ENCODE measurements at regions of chr4 and their contacts with region 1.

Region 1: DNA sequence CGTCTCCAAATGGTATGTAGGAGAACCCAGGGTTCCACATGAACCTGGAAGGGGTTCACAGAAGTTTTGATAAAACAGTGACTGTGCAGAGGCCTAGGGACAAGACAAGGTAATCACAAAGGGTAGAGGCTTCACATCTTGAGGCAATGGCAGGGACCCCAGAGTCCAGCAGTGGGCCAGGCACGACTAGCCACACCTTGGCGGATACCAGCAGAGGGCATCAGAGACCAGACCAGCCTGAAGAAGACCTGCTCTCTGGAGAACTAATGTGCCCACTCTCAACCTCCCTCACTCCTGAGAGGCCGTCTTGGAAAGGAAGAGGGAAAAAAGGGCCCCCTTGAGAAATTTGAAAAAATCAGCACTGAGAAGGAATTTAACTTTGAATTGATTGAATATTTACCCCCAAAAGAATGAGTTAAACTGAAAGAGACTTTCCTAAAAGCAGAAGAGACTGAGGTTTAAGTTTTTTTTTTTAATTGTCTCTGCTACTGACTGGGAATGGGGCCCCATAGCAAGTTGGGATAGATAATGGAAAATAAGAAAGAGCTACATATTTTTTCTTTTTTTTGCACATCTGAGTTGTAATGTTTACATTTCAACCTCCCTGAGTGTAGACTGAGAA is 243.8 kb upstream of the JADE1 start:
- DNase-seq: peak; percentile 77 to 83 (median 78)
- ATAC-seq: peak; percentile 86
- H3K4me3 ChIP-seq: no peak overlapping the region
- H3K27ac ChIP-seq: no peak overlapping the region
- H3K4me1 ChIP-seq: peaks cover 37% of the 10 kb centered on the region
- H3K27me3 ChIP-seq: no peaks in the 10 kb centered on the region
- CTCF ChIP-seq: peak; percentile 61 to 91 (median 84)
- POLR2A ChIP-seq: no peak

Region 2: GRCh38 chr4:128809477-128810330 is 244.0 kb after region 1 on chr4 and contains the start of gene JADE1:
- intact Hi-C with region 1: loop called (anchors 10 kb)
- DNase-seq: peak; percentile 94 to 96 (median 96)
- ATAC-seq: peak; percentile 67
- H3K4me3 ChIP-seq: peak within 1 kb of the TSS; percentile 82 to 93
- H3K27ac ChIP-seq: peak within 1 kb of the TSS; percentile 98 to 99 (median 98)
- H3K4me1 ChIP-seq: peaks cover 29% of the 10 kb centered on the region
- H3K27me3 ChIP-seq: no peaks in the 10 kb centered on the region
- CTCF ChIP-seq: peak; percentile 32 to 86 (median 77)
- POLR2A ChIP-seq: peak; percentile 85 to 88 (median 87)
- total RNA-seq, gene JADE1: 44.4 to 50.4 TPM

Region 3: DNA sequence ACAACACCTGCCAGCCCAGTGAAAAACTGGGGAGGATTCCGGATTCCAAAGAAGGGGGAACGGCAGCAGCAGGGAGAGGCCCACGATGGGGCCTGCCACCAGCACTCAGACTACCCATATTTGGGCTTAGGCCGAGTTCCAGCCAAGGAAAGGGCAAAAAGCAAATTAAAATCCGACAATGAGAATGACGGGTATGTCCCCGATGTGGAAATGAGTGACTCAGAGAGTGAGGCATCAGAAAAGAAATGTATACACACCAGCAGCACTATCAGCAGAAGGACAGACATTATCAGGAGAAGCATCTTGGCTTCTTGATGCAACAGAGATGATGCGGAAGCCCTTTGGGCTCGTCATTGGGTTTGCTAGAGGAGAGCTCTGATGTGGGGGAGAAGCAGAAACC is 306.3 kb after region 1 on chr4:
- intact Hi-C with region 1: loop called (anchors 5 kb)
- DNase-seq: no peak
- ATAC-seq: no peak
- H3K4me3 ChIP-seq: no peak overlapping the region
- H3K27ac ChIP-seq: no peak overlapping the region
- H3K4me1 ChIP-seq: no peaks in the 10 kb centered on the region
- H3K27me3 ChIP-seq: no peaks in the 10 kb centered on the region
- CTCF ChIP-seq: no peak
- POLR2A ChIP-seq: no peak

Measured in body of pancreas (tissue), 4 donors.